ENCODE measurements at regions of chr3 and their contacts with region 1.

Region 1: DNA sequence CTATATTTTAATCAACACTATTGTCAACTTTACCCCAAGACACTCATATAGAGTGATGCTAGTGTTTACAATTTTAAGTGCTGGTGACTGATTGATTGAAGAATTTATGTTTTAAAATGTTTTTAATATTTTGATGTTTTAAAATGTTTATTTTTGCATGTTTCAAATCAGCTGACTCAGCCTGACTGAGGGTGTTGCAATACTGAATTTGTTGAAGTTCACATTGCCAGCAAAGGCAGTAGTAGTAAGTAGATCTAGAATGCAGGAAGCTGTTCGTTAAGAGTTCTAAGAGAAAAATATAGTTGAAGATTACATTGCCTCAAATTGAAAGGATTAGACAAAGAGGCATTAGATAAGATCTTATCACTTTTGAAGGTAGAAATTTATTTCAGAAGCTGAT is 977.6 kb downstream of the IGSF11 start:
- DNase-seq: no peak
- H3K4me3 ChIP-seq: no peak overlapping the region
- CTCF ChIP-seq: no peak
- POLR2A ChIP-seq: no peak

Region 2: DNA sequence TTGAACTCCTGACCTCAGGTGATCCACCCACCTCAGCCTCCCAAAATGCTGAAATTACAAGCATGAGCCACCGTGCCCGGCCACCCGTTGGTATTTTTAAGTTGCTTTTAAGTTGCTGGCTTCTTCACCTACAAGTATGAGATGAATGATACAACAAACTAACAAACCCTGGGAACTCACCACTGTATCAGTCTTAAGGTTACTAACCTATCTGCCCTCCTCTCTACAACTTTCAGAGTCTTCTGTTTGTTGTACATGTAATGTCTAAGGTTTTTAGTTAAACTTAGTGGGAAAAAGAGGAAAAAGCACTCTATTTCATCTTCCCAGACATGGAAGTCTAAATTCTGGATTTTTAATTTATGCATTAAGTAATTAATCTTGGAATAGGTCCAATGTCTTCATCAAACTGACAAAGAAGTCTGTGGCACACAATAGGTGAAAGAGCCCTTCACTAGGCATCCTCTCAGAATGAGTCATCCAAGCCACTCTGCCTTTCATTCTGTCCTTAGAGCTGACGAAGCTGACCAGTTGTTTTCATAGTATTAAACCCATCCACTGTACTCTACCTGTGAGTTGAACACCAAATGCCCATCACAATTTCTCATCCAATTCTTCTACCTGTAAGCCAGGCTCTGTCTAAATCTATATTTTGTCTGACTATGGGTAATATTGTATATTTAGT is 411.4 kb before region 1 on chr3:
- intact Hi-C with region 1: no loop called
- DNase-seq: no peak
- H3K4me3 ChIP-seq: no peak overlapping the region
- CTCF ChIP-seq: no peak
- POLR2A ChIP-seq: no peak

Region 3: DNA sequence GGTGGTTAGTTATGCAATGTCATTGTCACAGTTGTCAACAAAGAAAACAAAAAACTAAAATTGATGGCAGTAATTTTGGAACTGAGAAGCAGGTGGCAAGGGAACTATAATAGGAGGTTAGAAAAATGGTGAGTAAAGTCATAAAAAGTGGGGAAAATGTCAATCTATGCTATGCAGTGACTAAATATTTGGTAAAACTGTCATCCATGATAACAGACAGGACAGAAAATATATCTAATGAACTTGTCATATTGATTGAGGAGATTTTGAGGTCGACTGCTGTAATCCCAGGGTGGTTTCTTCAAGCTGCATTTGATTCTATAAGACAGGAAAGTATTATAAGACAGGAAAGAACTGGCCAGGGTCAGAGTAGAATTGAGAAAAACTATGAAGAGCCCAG is 20.9 kb before region 1 on chr3:
- intact Hi-C with region 1: loop called (anchors 1 kb)
- DNase-seq: no peak
- H3K4me3 ChIP-seq: no peak overlapping the region
- CTCF ChIP-seq: no peak
- POLR2A ChIP-seq: no peak